ENCODE measurements at regions of chr20 and their contacts with region 1.

Region 1: DNA sequence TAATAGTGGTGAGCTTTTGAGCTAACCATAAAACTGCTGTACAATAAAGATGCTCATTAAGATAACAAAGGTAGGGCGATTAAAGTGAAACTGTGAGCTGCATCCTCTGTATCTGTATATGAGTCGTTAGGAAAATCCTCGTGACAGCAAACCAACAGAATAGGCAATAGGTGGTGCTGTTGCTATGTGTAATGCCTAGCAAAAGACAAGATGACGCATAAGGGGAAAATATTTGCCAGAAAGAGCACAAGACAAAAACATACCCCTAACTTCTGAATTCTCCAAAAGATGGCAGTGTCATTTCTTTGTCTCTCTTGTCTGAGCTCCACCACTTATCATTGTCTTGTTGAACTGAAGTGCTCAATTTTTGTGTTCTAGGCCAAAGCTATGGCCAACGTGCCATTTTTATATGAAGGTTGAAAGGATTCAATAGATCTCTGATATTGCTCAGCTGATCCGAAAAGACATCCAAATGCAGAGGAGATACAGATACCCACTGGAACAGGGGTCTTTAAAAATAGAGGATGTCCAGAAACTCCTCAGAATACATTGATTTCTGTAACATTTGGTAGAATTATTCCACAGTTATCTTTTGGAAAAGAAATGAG is 56.3 kb upstream of the ANKEF1 start:
- DNase-seq: peak; percentile 52

Region 2: DNA sequence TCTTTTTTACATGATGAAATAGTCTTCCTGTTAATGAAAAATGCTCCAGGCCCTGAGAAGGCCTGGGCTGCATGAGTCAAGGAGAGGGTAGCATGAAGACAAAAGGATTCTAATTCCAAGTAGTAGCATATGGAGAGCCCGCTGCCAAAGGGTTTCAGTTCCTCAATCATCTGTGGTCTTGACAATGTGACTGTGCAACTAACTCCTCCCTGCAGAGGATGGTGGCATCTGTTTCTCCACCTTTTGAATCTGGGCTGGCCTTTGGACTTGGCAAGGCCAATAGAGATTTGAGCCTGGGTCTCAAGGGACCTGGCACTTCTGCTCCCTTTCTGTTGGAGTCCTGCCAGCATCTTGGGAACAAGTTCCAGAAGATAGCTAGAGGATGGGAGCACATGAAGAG is 21.1 kb after region 1 on chr20:
- CTCF ChIA-PET with region 1: no interaction called
- POLR2A ChIA-PET with region 1: no interaction called
- DNase-seq: no peak

Region 3: GRCh38 chr20:10090588-10091166 is 112.2 kb after region 1 on chr20:
- CTCF ChIA-PET with region 1: interaction called, 29 read pairs
- POLR2A ChIA-PET with region 1: no interaction called
- DNase-seq: peak; percentile 45

Region 4: GRCh38 chr20:10185741-10186558 is 207.4 kb after region 1 on chr20:
- CTCF ChIA-PET with region 1: no interaction called
- POLR2A ChIA-PET with region 1: no interaction called
- DNase-seq: no peak

Measured in HEK293T (cell line).